ENCODE measurements at regions of chr7 and their contacts with region 1.

Region 1: GRCh38 chr7:54758702-54759592 is at the start of gene SEC61G:
- DNase-seq: peak; percentile 94 to 99
- ATAC-seq: peak; percentile 98
- H3K4me3 ChIP-seq: peak within 1 kb of the TSS; percentile 65
- H3K4me3 Mint-ChIP-seq: peak within 1 kb of the TSS; percentile 97
- H3K27ac ChIP-seq: peak within 1 kb of the TSS; percentile 70
- H3K27ac Mint-ChIP-seq: peak within 1 kb of the TSS; percentile 89 to 91
- H3K4me1 ChIP-seq: peaks cover 6% of the 10 kb centered on the region
- H3K4me1 Mint-ChIP-seq: peaks cover 22 to 37% of the 10 kb centered on the region in 2 donors
- H3K27me3 ChIP-seq: no peaks in the 10 kb centered on the region
- H3K27me3 Mint-ChIP-seq: peaks cover 5 to 11% of the 10 kb centered on the region in 2 donors
- CTCF ChIP-seq: no peak
- total RNA-seq, gene SEC61G: 38.4 to 54.1 (median 41.0) TPM

Region 2: GRCh38 chr7:54719974-54720373 is 39.0 kb before region 1 on chr7:
- intact Hi-C with region 1: no loop called
- DNase-seq: no peak
- ATAC-seq: no peak
- H3K4me3 ChIP-seq: no peak overlapping the region
- H3K4me3 Mint-ChIP-seq: no peak overlapping the region
- H3K27ac ChIP-seq: no peak overlapping the region
- H3K27ac Mint-ChIP-seq: no peak overlapping the region
- H3K4me1 ChIP-seq: no peaks in the 10 kb centered on the region
- H3K4me1 Mint-ChIP-seq: peaks cover 0 to 4% of the 10 kb centered on the region in 2 donors
- H3K27me3 ChIP-seq: no peaks in the 10 kb centered on the region
- H3K27me3 Mint-ChIP-seq: peaks cover 0 to 3% of the 10 kb centered on the region in 2 donors
- CTCF ChIP-seq: no peak

Region 3: DNA sequence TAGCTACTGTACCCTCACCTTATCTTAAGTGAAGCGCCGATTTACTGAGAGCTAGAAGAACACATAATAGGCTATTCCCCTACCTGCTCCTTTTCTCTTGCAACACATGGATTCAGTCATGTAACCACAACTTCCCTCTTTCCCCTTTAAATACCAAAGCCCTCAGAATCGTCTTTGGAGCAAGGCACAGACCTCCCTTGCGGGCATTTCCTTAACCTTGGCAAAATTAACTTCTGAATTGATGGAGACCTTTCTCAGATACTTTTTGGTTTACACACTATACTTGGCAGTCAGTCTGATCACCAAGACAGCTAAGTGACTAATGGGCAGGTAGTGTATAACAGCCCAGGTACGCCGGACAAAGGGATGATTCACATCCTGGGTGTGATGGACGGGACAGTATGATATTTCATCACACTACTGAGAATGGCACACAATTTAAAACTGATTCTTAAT is 72.7 kb after region 1 on chr7:
- intact Hi-C with region 1: no loop called
- DNase-seq: no peak
- ATAC-seq: no peak
- H3K4me3 ChIP-seq: no peak overlapping the region
- H3K4me3 Mint-ChIP-seq: no peak overlapping the region
- H3K27ac ChIP-seq: no peak overlapping the region
- H3K27ac Mint-ChIP-seq: no peak overlapping the region
- H3K4me1 ChIP-seq: no peaks in the 10 kb centered on the region
- H3K4me1 Mint-ChIP-seq: no peaks in the 10 kb centered on the region
- H3K27me3 ChIP-seq: no peaks in the 10 kb centered on the region
- H3K27me3 Mint-ChIP-seq: no peaks in the 10 kb centered on the region
- CTCF ChIP-seq: no peak

Region 4: DNA sequence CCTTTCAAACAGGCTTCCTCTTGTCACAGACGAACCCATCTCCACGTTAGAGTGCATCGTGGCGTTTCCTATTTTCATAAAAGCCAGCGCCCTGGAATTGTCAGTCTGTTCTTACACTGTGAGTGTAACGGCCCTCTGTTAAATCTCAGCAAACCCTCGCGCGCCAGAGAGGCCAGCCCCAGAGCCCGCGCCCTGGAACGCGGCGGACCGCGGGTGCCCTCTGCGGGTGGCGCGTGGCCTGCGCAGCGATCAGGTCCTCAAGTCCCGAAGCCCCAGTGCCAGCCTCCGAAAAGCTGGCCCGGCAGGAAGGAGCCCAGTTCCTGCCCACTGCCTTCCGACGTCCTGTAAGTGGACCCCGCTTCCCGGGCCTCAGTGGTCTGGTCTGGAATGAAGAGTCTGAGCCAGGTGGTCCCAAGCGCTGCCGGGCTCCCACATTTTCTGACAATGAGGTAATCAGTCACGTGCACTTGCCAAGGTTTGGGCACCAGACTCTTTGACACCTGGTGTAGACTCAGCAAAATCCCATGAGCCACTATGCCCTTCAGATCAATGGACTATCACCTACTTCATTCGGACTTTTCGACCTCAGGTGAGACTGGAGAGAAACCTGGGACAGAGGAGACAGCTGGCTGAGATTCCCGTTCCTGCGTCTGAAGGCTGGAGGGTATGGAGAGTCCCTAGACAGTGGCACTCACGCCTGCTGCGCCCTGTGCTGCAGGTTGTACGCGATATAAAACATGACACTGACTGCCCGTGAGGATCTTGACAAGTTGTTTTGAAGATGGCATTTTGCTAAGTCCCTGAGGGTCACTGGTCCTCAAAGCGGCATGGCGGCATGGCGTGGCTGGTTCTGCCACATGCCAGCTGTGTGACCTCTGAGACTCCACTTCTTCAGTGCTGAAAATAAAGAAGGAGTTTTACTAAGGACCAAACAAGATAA is 496.8 kb after region 1 on chr7:
- intact Hi-C with region 1: loop called (anchors 5 kb)
- DNase-seq: peak; percentile 52 to 80
- ATAC-seq: peak; percentile 87 to 96 (median 90)
- H3K4me3 ChIP-seq: peak overlapping the region; percentile 26
- H3K4me3 Mint-ChIP-seq: peak overlapping the region; percentile 84
- H3K27ac ChIP-seq: no peak overlapping the region
- H3K27ac Mint-ChIP-seq: peak overlapping the region in 1 of 2 donors; percentile 76
- H3K4me1 ChIP-seq: peaks cover 16% of the 10 kb centered on the region
- H3K4me1 Mint-ChIP-seq: peaks cover 11 to 12% of the 10 kb centered on the region in 2 donors
- H3K27me3 ChIP-seq: peaks cover 19% of the 10 kb centered on the region
- H3K27me3 Mint-ChIP-seq: peaks cover 23 to 63% of the 10 kb centered on the region in 2 donors
- CTCF ChIP-seq: peak; percentile 12

Region 5: DNA sequence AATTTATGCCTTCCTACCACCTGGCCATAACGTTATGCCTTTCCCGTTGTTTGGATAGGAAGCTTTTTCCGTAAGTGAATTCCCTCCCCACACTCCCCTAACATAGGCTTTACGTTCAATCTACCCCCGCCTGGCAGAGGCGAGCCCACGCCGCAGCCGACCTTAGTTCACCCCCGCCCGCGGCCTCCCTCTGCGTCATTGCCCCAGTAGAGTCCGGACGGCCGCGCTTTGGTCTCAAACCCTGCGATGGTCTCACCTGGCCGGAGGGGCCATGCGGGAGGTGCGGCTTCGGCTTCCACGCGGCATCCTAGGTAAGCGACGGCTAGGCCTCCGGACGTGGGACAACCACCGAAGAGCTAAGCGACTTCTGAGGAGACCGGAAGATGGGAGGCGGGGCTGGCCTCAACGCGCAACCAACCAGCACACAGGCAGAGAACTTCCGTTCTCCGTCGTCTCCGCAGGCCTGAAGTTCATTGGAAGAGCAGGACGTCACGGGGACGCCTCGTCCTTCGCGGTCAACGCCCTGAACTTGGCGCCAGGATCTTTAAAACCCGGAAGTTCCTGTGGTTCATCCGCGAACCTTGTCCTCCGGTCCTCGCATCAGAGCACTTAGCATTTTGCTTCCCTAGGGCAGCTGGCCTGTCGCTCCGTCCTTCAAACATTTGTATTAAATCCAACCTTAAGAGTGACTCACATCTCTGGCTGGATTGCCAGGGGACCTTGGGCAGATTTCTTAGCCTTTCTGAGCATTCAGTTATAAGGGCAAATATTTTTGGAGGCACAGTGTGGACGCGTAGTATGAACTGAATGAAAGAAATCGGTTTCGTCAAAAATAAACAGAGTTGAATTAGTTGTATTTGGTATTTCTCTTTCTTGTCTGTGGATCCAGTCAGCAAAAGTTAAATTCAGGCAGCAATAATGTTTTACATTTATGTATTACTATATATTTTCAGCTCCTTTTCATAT is 1347.4 kb after region 1 on chr7 and contains the start of gene CHCHD2:
- intact Hi-C with region 1: loop called (anchors 5 kb)
- DNase-seq: peak; percentile 88 to 99
- ATAC-seq: peak; percentile 96 to 100 (median 98)
- H3K4me3 ChIP-seq: peak within 1 kb of the TSS; percentile 67
- H3K4me3 Mint-ChIP-seq: peak within 1 kb of the TSS; percentile 97
- H3K27ac ChIP-seq: peak within 1 kb of the TSS; percentile 89
- H3K27ac Mint-ChIP-seq: peak within 1 kb of the TSS; percentile 98 to 100
- H3K4me1 ChIP-seq: peaks cover 18% of the 10 kb centered on the region
- H3K4me1 Mint-ChIP-seq: peaks cover 24 to 30% of the 10 kb centered on the region in 2 donors
- H3K27me3 ChIP-seq: no peaks in the 10 kb centered on the region
- H3K27me3 Mint-ChIP-seq: no peaks in the 10 kb centered on the region
- CTCF ChIP-seq: no peak
- total RNA-seq, gene CHCHD2: 176 to 224 (median 184) TPM

Measured in natural killer cell (primary cell).